ENCODE measurements at regions of chr17 and their contacts with region 1.

Region 1: DNA sequence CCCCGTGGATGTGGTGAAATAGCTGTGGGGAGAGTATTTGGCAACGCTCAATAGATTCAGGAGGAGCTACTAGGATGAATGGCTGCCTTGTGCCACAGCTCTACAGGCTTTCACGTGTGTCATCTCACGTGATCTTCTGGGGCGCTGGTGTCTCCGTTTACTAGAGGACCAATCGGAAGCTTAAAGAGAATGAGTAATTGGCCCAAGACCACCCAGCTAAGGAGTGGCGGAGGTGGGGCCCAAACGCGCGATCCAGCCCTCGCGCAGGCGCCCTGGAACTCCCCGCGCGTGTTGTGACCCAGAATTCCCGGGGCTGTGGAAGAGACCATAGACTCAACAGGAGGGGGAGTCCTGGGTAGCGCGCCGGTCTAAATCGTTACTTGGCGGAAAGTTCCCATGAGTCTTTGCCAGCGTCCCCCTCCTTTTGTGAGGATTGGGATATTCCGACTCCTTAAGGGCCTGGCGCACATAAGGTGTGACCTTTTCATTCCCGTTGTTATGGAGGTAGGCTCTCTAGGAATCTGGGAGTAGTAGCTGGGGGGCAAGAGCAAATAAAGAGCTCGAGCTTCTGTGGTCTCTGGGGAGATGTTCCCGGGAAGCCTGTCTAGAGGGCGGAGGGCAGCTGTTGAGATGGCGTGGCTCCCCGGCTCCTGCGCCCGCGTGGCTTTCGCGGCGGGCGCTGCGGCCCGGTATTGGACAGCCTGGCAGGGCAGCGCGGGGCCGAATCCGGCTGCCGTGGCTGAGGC is 23.4 kb downstream of the TRPV2 start:
- DNase-seq: peak; percentile 99
- CTCF ChIP-seq: no peak

Region 2: GRCh38 chr17:16329519-16330271 is 109.0 kb before region 1 on chr17:
- CTCF ChIA-PET with region 1: no interaction called
- POLR2A ChIA-PET with region 1: no interaction called
- DNase-seq: peak; percentile 56
- CTCF ChIP-seq: no peak

Region 3: GRCh38 chr17:16380640-16381495 is 57.9 kb before region 1 on chr17 and contains the start of gene UBB:
- CTCF ChIA-PET with region 1: interaction called, 4 read pairs
- POLR2A ChIA-PET with region 1: interaction called, 55 read pairs
- DNase-seq: peak; percentile 94
- CTCF ChIP-seq: peak; percentile 6

Region 4: DNA sequence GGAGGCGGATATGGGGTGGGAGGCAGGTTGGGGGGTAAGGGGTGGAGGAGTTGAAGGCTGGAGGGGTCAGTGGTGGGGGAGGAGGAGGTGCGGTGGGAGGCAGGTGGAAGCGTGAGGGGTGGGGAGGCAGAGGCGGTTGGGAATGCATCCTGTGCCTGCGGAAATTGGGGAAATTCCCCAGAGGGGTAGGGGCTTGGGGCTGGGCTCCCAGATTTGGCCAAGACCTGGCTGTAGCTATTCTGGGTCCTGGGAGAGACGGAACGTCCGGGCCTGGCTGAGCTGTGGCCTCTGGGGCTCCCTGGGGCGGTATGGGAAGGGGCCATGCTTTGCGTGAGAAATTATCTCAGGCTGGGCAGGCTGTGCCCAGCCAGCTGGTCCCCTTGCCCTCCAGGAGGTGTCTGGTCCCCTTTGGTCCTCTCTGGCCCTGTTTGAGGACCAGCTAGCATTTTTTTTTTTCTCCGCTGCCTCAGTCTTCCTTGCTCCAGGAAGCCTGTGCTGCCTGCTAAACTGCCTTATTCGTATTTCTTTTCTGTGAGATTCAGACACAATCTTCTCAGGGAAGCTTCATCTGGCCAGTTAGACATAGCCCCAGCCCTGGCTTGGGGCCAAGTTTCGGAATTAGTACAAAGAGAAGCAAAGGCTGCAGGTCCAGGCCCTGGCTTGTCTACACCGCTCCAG is 30.7 kb before region 1 on chr17:
- CTCF ChIA-PET with region 1: interaction called, 3 read pairs
- POLR2A ChIA-PET with region 1: interaction called, 11 read pairs
- DNase-seq: peak; percentile 87
- CTCF ChIP-seq: no peak

Region 5: DNA sequence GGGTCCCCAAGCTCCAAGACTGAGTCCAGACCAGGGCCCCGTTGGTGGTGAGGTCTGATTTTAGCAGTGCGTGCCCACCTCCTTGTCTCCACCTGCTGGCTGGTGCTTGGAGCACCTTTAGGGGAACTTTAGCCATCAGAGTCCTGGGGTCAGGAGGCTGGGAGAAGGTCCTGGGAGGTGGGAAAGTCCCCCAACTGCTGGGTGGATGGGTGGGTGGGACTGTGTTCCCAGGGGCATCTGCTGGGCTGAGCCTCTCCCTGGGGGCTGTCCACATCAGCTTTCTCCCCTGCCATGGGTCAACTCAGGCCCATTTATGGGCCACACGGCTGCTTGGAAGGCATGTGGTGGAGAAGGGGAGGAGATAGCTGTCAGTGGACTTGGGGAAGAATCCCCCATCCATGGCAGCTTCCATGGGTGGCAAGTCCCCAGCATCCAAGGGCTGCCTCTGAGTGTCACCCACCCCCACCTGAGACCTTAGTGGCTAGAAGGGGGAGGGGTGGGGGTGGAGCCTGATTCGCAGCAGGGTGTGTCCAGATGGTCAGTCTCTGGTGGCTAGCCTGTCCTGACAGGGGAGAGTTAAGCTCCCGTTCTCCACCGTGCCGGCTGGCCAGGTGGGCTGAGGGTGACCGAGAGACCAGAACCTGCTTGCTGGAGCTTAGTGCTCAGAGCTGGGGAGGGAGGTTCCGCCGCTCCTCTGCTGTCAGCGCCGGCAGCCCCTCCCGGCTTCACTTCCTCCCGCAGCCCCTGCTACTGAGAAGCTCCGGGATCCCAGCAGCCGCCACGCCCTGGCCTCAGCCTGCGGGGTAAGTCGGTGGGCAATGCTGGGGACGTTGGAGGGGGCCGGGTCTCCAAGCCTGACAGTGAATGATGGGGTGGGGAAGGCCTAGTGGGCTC is 23.5 kb before region 1 on chr17 and contains the start of gene TRPV2:
- CTCF ChIA-PET with region 1: interaction called, 43 read pairs
- POLR2A ChIA-PET with region 1: interaction called, 22 read pairs
- DNase-seq: peak; percentile 78
- CTCF ChIP-seq: peak; percentile 86

Region 6: GRCh38 chr17:16428098-16428882 is 10.4 kb before region 1 on chr17:
- CTCF ChIA-PET with region 1: interaction called, 15 read pairs
- POLR2A ChIA-PET with region 1: interaction called, 10 read pairs
- DNase-seq: peak; percentile 67
- CTCF ChIP-seq: peak; percentile 40

Region 7: GRCh38 chr17:16449121-16449570 is 10.4 kb after region 1 on chr17:
- CTCF ChIA-PET with region 1: interaction called, 73 read pairs
- POLR2A ChIA-PET with region 1: interaction called, 8 read pairs
- DNase-seq: no peak
- CTCF ChIP-seq: no peak

Measured in GM10248 (cell line).